Activated T-helper 1 cell treated with anti-CD3 and anti-CD28 coated beads, Interleukin-12 subunit alpha, Interleukin-12 subunit beta, Interleukin-2, Interleukin-4 antibody, amounts not matched to agents 30 ng/mL and 10 ng/mL and 1 ng/mL, durations not matched to agents 14 hours and 24 hours and 36 hours (primary cell): ENCODE measurements at regions of chr17 and their contacts with region 1.

Region 1: GRCh38 chr17:82051776-82052637 is at the starts of genes GPS1 and RFNG:
- DNase-seq: peak; percentile 74
- H3K4me3 Mint-ChIP-seq: peak within 1 kb of the TSS; percentile 91
- H3K27ac Mint-ChIP-seq: peak within 1 kb of the TSS; percentile 89
- H3K4me1 Mint-ChIP-seq: peaks cover 14% of the 10 kb centered on the region
- H3K27me3 Mint-ChIP-seq: no peaks in the 10 kb centered on the region
- total RNA-seq, gene GPS1: 112 and 124 TPM in 2 replicates
- total RNA-seq, gene RFNG: 24.1 and 26.8 TPM in 2 replicates

Region 2: GRCh38 chr17:81991684-81992305 is 60.2 kb before region 1 on chr17:
- intact Hi-C with region 1: no loop called
- DNase-seq: no peak
- H3K4me3 Mint-ChIP-seq: no peak overlapping the region
- H3K27ac Mint-ChIP-seq: no peak overlapping the region
- H3K4me1 Mint-ChIP-seq: no peaks in the 10 kb centered on the region
- H3K27me3 Mint-ChIP-seq: no peaks in the 10 kb centered on the region

Region 3: DNA sequence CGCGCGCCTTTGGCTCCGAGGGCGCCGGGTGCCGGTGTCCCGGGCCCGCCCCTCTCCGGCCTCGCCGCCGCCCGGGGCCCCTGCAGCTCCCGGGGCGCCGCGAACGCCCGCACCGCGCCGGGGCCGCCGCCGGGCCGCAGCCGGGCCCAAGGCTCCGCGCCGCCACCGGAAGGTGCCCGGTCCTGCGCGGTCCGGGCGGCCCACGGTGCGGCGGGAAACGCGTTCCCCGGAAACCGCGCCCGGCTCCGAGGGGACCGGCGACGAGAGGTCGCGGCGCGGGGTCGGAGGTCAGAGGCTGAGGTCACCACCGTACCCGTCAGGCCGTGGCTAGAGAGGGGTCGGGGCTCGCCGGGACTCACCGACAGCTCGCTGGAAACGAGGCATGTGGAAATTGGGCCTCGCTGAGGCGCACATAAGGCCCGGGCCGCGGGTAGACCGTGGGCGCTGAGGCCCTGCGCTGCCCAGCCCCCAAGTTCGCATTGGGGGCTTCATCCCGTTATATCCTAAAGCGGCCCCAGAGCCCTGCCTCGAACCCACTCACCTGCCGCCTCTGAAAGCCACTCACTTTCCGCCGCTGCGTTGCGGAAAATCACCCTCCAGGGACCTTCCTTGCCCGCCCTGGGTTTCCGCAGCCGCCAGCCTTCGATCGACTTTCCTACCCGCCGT is 13.8 kb after region 1 on chr17 and contains the start of gene DUS1L:
- intact Hi-C with region 1: loop called (anchors 1 kb)
- DNase-seq: peak; percentile 71
- H3K4me3 Mint-ChIP-seq: peak within 1 kb of the TSS; percentile 86
- H3K27ac Mint-ChIP-seq: peak within 1 kb of the TSS; percentile 83
- H3K4me1 Mint-ChIP-seq: no peaks in the 10 kb centered on the region
- H3K27me3 Mint-ChIP-seq: no peaks in the 10 kb centered on the region
- total RNA-seq, gene DUS1L: 231 and 235 TPM in 2 replicates

Region 4: GRCh38 chr17:82098072-82098821 is 46.2 kb after region 1 on chr17 and contains the start of gene FASN:
- intact Hi-C with region 1: loop called (anchors 5 kb)
- DNase-seq: peak; percentile 90
- H3K4me3 Mint-ChIP-seq: peak within 1 kb of the TSS; percentile 82
- H3K27ac Mint-ChIP-seq: peak within 1 kb of the TSS; percentile 72
- H3K4me1 Mint-ChIP-seq: no peaks in the 10 kb centered on the region
- H3K27me3 Mint-ChIP-seq: no peaks in the 10 kb centered on the region
- total RNA-seq, gene FASN: 415 and 421 TPM in 2 replicates

Region 5: DNA sequence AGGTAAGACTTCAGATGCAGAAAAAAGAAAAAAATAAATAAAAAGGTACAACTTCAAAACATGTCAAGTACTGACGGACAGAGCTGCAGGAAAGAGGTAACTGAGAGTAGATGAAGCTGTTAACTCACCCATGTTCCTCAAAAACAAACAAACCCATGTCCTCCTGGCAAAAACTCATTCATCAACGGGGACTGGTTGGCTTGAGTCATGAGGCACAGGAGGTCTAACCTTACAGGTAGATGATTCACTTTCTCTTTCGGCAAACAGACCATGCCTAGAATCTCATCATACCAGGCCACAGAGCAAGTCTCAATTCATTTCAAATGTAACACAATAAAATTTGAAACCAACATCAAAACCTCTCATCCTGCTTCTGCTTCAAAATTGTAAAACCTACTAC is 58.3 kb after region 1 on chr17:
- intact Hi-C with region 1: no loop called
- DNase-seq: no peak
- H3K4me3 Mint-ChIP-seq: no peak overlapping the region
- H3K27ac Mint-ChIP-seq: no peak overlapping the region
- H3K4me1 Mint-ChIP-seq: peaks cover 11% of the 10 kb centered on the region
- H3K27me3 Mint-ChIP-seq: no peaks in the 10 kb centered on the region

Region 6: GRCh38 chr17:82434216-82434565 is 382.2 kb after region 1 on chr17:
- intact Hi-C with region 1: no loop called
- DNase-seq: no peak
- H3K4me3 Mint-ChIP-seq: no peak overlapping the region
- H3K27ac Mint-ChIP-seq: no peak overlapping the region
- H3K4me1 Mint-ChIP-seq: peaks cover 16% of the 10 kb centered on the region
- H3K27me3 Mint-ChIP-seq: no peaks in the 10 kb centered on the region